OCI-LY7 (cell line): ENCODE measurements at regions of chr6 and their contacts with region 1.

Region 1: DNA sequence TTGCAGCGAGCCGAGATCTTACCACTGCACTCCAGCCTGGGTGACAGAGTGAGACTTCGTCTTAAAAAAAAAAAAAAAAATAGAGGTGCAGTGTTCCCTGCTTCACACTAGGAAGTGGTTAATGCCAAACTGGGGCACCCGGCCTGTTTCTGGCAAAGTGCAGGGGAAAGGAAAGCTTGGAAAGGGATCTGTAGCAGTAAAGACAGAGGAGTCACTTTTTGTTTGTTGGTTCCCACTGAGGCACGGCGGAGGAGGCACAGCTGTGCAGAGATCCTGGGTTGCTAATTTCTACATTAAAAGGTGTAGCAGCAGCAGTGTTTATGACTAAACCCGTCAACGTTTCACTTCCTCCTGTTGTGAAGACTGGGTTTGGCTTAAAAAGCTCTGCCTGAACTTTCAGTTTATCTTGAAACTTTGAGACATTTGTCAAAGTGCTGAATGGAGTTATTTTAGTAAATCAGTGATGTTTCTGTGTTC is 125.6 kb downstream of the CARMIL1 start:
- DNase-seq: peak; percentile 89
- H3K4me3 ChIP-seq: peak overlapping the region; percentile 63
- H3K27ac ChIP-seq: peak overlapping the region; percentile 98
- H3K4me1 ChIP-seq: peaks cover 98% of the 10 kb centered on the region
- CTCF ChIP-seq: no peak

Region 2: DNA sequence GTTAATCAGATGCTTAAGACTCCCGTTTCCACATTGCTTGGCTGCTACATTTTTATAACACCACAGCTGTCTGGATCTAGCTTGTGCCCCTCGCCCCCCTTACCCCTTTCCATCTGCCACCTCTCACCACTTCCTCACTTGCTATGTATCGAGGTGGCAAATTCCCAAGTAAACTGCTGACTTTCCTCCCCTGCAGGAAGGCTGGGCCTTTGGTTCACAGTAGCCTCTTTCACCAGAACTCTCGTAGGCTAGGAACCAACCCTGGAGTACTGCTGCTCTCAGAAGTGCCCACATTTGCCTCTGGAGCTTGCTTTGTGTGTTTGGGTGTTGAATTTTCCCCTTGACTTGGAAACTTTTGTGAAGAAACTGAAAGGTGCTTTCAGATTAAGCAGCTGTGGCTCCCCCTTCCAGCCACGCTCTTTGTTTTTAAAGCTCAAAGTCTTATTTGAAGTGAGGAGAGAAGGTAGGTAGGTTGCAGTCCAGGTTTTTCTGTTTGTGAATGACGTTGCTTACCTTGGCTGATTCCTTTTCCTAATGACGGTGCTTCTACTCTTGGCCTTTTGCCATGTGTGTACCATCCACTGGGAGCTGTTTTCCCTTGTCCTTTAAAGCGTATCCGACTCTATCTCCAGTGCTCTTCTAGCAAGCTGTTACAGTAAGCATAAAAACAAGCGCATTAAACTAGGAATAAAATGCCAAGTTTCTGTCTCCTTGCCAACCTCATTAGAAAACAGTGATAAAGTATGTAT is 35.1 kb before region 1 on chr6:
- CTCF ChIA-PET with region 1: interaction called, 3 read pairs
- POLR2A ChIA-PET with region 1: interaction called, 131 read pairs
- intact Hi-C with region 1: loop called (anchors 2 kb)
- DNase-seq: peak; percentile 59
- H3K4me3 ChIP-seq: peak overlapping the region; percentile 65
- H3K27ac ChIP-seq: peak overlapping the region; percentile 87
- H3K4me1 ChIP-seq: peaks cover 90% of the 10 kb centered on the region
- CTCF ChIP-seq: 0 out of 2 replicates have a peak, but pooled peaks have one; percentile 16

Region 3: DNA sequence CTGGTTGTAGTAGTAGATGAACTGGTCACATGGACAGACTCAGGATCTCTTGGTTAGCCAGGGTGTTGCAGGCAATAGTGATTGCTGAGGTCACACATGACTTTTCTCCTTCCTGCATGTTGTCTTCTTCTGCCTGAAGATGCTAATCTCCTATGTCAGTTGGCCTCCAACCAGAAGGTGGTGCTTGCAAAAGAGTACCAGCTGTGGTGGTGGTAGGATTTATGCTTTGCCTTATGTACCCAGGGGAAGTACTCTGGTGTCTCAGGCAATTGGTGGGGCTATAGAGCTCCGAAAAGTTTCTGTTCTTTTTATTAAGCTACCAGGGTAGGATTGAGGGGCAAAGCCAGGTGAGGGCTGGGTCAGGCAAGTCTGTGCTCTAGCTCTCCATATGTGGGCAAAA is 27.1 kb before region 1 on chr6:
- CTCF ChIA-PET with region 1: interaction called, 3 read pairs
- POLR2A ChIA-PET with region 1: interaction called, 41 read pairs
- intact Hi-C with region 1: no loop called
- DNase-seq: peak; percentile 92
- H3K4me3 ChIP-seq: peak overlapping the region; percentile 64
- H3K27ac ChIP-seq: peak overlapping the region; percentile 82
- H3K4me1 ChIP-seq: peaks cover 76% of the 10 kb centered on the region
- CTCF ChIP-seq: peak; percentile 83

Region 4: DNA sequence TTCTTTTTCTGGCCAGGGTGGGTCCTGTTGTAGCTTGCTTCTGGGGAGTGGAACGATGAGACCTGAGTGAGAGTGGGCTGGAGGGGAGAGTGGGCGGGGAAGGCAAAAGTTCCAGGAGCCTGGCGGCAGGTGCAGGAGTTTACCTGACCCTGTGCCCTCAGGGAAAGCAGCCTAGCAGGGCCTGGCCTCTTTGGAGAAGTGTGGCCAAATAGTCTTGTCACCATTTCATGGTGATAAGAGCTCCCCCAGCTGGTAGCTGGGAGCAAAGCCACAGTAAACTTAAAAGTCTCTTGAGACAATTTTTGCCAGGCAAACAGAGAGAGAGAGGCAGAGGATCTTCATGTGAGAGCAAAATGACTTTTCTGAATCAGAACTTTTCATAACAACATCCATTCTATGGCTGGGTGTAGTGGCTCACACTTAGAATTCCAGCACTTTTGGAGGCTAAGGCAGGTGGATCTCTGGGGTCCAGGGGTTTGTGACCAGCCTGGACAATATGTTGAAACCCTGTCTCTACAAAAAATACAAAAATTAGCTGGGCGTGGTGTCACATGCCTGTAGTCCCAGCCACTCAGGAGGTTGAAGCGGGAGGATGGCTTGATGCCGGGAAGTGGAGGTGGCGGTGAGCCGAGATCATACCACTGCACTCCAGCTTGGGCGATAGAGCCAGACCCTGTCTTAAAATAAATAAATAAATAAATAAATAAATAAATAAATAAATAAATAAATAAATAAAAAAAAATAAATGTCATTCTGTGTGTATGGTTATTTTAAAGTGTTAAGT is 85.5 kb after region 1 on chr6:
- CTCF ChIA-PET with region 1: interaction called, 3 read pairs
- POLR2A ChIA-PET with region 1: interaction called, 4 read pairs
- intact Hi-C with region 1: loop called (anchors 2 kb)
- DNase-seq: peak; percentile 93
- H3K4me3 ChIP-seq: no peak overlapping the region
- H3K27ac ChIP-seq: peak overlapping the region; percentile 55
- H3K4me1 ChIP-seq: peaks cover 23% of the 10 kb centered on the region
- CTCF ChIP-seq: peak; percentile 90

Region 5: DNA sequence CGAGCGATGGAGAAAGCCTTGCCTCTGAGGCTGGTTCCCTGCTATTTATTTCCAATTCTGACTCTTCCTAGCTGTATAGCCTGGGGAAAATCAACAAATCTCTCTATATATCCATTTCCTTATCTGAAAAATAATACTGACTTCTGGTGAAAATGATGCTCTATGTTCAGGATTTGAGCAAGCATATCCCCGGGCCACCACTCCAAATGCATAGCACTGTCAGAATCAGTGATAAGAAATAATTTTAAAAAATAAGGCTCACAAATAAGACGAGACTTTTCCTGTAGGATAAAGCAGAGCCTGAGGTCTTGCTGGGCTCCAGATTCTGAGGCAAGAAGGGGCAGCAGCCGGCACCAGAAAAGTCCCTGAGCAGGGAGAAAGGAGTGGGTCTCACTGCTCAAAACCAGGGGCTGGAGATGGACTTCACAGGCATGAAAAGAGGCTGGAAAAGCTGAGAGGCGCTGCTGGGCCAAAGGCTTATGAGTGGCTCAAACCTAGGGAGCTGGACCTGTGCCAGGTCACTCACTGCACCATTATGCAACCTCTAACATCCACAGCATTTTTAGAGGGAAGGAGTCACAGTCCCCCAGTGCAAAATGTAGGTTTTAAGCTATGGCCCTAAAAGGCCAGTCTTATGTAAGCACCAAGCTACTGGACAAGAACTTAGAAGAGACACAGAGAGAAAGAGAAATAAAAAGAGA is 301.7 kb after region 1 on chr6:
- CTCF ChIA-PET with region 1: no interaction called
- POLR2A ChIA-PET with region 1: no interaction called
- intact Hi-C with region 1: no loop called
- DNase-seq: no peak
- H3K4me3 ChIP-seq: no peak overlapping the region
- H3K27ac ChIP-seq: no peak overlapping the region
- H3K4me1 ChIP-seq: no peaks in the 10 kb centered on the region
- CTCF ChIP-seq: no peak

Region 6: GRCh38 chr6:26115226-26115625 is 710.5 kb after region 1 on chr6:
- CTCF ChIA-PET with region 1: no interaction called
- POLR2A ChIA-PET with region 1: interaction called, 11 read pairs
- intact Hi-C with region 1: no loop called
- DNase-seq: no peak
- H3K4me3 ChIP-seq: no peak overlapping the region
- H3K27ac ChIP-seq: peak overlapping the region; percentile 10
- H3K4me1 ChIP-seq: peaks cover 23% of the 10 kb centered on the region
- CTCF ChIP-seq: no peak